ENCODE measurements at regions of chr10 and their contacts with region 1.

Region 1: DNA sequence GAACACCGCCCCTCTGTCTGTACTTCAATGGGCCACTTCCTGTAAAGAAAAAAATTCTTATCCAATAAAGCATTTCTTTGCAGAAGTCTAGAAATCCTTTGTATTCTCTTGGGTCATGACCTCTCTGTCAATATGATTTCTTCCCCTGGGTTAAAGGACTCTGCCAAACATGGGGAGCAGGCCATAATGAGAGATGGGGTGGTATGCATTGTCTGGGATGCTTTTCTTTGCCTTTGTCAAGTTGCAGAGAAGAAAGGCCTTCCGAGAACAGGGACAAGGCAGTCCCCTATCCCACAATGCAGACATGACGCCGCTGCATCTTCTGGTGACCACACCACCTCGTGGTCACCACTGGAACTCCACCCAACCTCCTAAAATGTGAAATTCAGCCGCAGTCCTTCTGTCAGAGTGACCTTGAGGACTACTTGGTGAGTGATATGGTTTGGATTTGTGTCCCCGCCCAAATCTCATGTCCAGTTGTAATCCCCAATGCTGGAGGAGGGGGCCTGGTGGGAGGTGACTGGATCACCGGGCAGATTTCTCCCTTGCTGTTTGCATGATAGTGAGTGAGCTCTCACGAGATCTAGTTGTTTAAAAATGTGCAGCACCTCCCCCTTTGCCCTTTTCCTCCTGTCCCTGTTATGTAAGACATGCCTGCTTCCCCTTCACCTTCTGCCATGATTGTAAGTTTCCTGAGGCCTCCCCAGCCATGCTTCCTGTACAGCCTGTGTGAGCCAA is 15.2 kb upstream of the FRMPD2 start:
- DNase-seq: peak; percentile 47
- ATAC-seq: peak; percentile 78
- H3K4me3 Mint-ChIP-seq: no peak overlapping the region
- H3K27ac Mint-ChIP-seq: no peak overlapping the region
- H3K4me1 Mint-ChIP-seq: peaks cover 18% of the 10 kb centered on the region
- H3K27me3 Mint-ChIP-seq: no peaks in the 10 kb centered on the region
- CTCF ChIP-seq: peak; percentile 31

Region 2: GRCh38 chr10:48215488-48216204 is 74.0 kb before region 1 on chr10:
- CTCF ChIA-PET with region 1: interaction called, 6 read pairs
- POLR2A ChIA-PET with region 1: no interaction called
- intact Hi-C with region 1: loop called (anchors 1 kb)
- DNase-seq: no peak
- ATAC-seq: no peak
- H3K4me3 Mint-ChIP-seq: no peak overlapping the region
- H3K27ac Mint-ChIP-seq: no peak overlapping the region
- H3K4me1 Mint-ChIP-seq: no peaks in the 10 kb centered on the region
- H3K27me3 Mint-ChIP-seq: peaks cover 10% of the 10 kb centered on the region
- CTCF ChIP-seq: no peak

Region 3: GRCh38 chr10:48231699-48232315 is 57.9 kb before region 1 on chr10:
- CTCF ChIA-PET with region 1: interaction called, 3 read pairs
- POLR2A ChIA-PET with region 1: no interaction called
- intact Hi-C with region 1: loop called (anchors 5 kb)
- DNase-seq: no peak
- ATAC-seq: no peak
- H3K4me3 Mint-ChIP-seq: no peak overlapping the region
- H3K27ac Mint-ChIP-seq: no peak overlapping the region
- H3K4me1 Mint-ChIP-seq: no peaks in the 10 kb centered on the region
- H3K27me3 Mint-ChIP-seq: peaks cover 20% of the 10 kb centered on the region
- CTCF ChIP-seq: no peak

Region 4: DNA sequence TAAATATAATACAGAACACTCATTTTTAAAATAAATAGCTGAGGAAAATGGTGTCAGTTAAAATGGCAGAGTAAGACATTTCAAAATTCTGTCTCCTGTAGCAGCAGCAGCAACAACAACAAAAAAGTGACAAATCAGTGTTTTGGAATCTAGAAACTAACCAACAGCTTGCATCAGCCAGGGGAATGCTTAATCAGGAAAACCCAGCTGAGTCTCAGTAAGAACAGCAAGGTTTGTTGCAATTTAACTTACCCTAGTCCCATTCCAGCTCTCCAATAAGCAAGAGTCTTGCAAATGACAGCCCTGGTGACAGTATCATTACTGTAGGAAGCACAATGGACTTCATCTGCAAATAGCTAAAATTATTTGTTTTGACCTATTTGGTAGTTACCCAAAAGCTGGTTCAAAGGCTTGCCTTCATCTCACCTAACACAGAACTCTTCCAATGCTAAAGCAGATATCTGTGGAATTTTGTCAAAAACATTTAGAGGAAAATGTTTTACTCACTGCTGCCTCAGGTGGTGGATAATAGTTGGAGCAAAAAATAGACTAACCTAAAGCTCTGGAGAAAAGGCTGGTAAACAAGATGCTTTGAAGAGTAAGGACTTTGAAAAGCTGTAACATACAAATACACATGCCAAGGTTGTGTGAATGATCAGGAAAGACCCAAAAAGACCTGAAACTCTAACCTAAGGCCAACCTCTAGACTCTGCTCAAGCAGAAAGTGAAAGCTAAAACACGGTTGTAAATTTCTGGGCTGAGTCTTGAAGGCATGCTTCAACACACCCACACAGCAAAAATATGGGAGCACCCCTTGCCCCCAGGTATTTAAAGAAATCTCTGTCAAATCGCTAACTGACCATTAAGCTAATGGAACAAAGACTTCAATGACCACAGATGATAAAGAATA is 325.1 kb after region 1 on chr10:
- CTCF ChIA-PET with region 1: no interaction called
- POLR2A ChIA-PET with region 1: no interaction called
- intact Hi-C with region 1: no loop called
- DNase-seq: no peak
- ATAC-seq: peak; percentile 52
- H3K4me3 Mint-ChIP-seq: no peak overlapping the region
- H3K27ac Mint-ChIP-seq: no peak overlapping the region
- H3K4me1 Mint-ChIP-seq: peaks cover 17% of the 10 kb centered on the region
- H3K27me3 Mint-ChIP-seq: peaks cover 17% of the 10 kb centered on the region
- CTCF ChIP-seq: no peak